IMR-90 (cell line): ENCODE measurements at regions of chr17 and their contacts with region 1.

Region 1: GRCh38 chr17:3913531-3914311 is 2.5 kb downstream of the P2RX1 start:
- DNase-seq: peak; percentile 76
- ATAC-seq: peak; percentile 100
- H3K4me3 ChIP-seq: no peak overlapping the region
- H3K27ac ChIP-seq: no peak overlapping the region
- H3K4me1 ChIP-seq: peaks cover 5% of the 10 kb centered on the region; the same call in 1 of the 2 replicates
- H3K27me3 ChIP-seq: no peaks in the 10 kb centered on the region
- CTCF ChIP-seq: peak; percentile 95
- POLR2A ChIP-seq: peak; percentile 53; the same call in 1 of the 2 replicates
- RAD21 ChIP-seq: peak; percentile 96

Region 2: GRCh38 chr17:3865176-3865575 is 48.5 kb before region 1 on chr17:
- CTCF ChIA-PET with region 1: interaction called, 3 read pairs
- POLR2A ChIA-PET with region 1: no interaction called
- dilution Hi-C with region 1: no loop called
- in situ Hi-C with region 1: no loop called
- intact Hi-C with region 1: loop called (anchors 2 kb)
- DNase-seq: no peak
- ATAC-seq: no peak; the same call in 1 of the 2 replicates
- H3K4me3 ChIP-seq: no peak overlapping the region
- H3K27ac ChIP-seq: no peak overlapping the region
- H3K4me1 ChIP-seq: no peaks in the 10 kb centered on the region
- H3K27me3 ChIP-seq: no peaks in the 10 kb centered on the region
- CTCF ChIP-seq: no peak
- POLR2A ChIP-seq: no peak
- RAD21 ChIP-seq: no peak

Region 3: GRCh38 chr17:4004517-4005295 is 91.0 kb after region 1 on chr17:
- CTCF ChIA-PET with region 1: interaction called, 11 read pairs
- POLR2A ChIA-PET with region 1: no interaction called
- dilution Hi-C with region 1: no loop called
- in situ Hi-C with region 1: loop called (anchors 5 kb)
- intact Hi-C with region 1: loop called (anchors 2 kb)
- DNase-seq: no peak
- ATAC-seq: no peak
- H3K4me3 ChIP-seq: no peak overlapping the region
- H3K27ac ChIP-seq: no peak overlapping the region
- H3K4me1 ChIP-seq: peaks cover 23% of the 10 kb centered on the region
- H3K27me3 ChIP-seq: no peaks in the 10 kb centered on the region
- CTCF ChIP-seq: peak; percentile 63
- POLR2A ChIP-seq: no peak
- RAD21 ChIP-seq: peak; percentile 62

Region 4: GRCh38 chr17:4074831-4075495 is 161.2 kb after region 1 on chr17:
- CTCF ChIA-PET with region 1: interaction called, 4 read pairs
- POLR2A ChIA-PET with region 1: no interaction called
- dilution Hi-C with region 1: no loop called
- in situ Hi-C with region 1: no loop called
- intact Hi-C with region 1: loop called (anchors 1 kb)
- DNase-seq: peak; percentile 47
- ATAC-seq: peak; percentile 63; the same call in 1 of the 2 replicates
- H3K4me3 ChIP-seq: no peak overlapping the region
- H3K27ac ChIP-seq: no peak overlapping the region
- H3K4me1 ChIP-seq: peaks cover 6% of the 10 kb centered on the region
- H3K27me3 ChIP-seq: no peaks in the 10 kb centered on the region
- CTCF ChIP-seq: peak; percentile 62
- POLR2A ChIP-seq: no peak
- RAD21 ChIP-seq: peak; percentile 60

Region 5: GRCh38 chr17:4405038-4405669 is 491.4 kb after region 1 on chr17:
- CTCF ChIA-PET with region 1: no interaction called
- POLR2A ChIA-PET with region 1: no interaction called
- dilution Hi-C with region 1: no loop called
- in situ Hi-C with region 1: no loop called
- intact Hi-C with region 1: no loop called
- DNase-seq: no peak
- ATAC-seq: no peak
- H3K4me3 ChIP-seq: no peak overlapping the region
- H3K27ac ChIP-seq: no peak overlapping the region
- H3K4me1 ChIP-seq: no peaks in the 10 kb centered on the region
- H3K27me3 ChIP-seq: no peaks in the 10 kb centered on the region
- CTCF ChIP-seq: no peak
- POLR2A ChIP-seq: no peak
- RAD21 ChIP-seq: no peak